ENCODE measurements at regions of chr12 and their contacts with region 1.

Region 1: DNA sequence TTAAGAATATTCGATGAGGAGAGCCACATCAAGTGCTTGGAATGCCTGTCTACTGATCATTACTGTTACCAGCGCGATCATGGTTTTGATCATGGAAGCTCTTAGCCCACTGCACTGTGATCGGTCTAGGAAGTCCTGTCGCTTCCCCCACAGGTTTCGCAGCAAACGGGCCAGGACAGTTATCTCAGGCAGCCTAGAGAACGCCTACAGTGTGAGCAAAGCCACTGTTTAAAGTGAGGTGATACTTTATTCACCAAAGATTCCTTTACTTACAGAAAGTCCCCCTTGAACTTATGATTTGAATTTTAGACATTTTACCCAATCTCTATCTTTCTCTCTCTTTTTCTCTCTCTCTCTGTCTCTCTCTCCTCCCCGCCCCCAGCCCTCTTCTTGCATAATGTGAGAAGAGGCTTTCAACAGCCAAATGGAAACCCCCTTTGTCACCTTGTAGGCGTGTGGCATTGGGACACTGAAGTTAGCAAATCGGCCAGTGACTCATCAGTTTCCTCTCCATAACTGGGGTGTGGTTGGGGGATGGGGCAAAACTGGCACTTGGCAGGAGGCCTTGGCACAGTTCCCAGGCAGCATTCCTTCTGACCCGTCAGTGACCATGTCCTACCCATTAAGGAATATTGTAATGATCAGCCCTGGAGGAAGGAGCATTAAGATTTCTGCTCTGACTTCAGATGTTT is 214.8 kb downstream of the CHST11 start:
- DNase-seq: peak; percentile 88
- ATAC-seq: peak; percentile 86
- H3K4me3 ChIP-seq: peak overlapping the region; percentile 49
- H3K27ac ChIP-seq: peak overlapping the region; percentile 99
- H3K4me1 ChIP-seq: peaks cover 55% of the 10 kb centered on the region
- H3K27me3 ChIP-seq: no peaks in the 10 kb centered on the region
- CTCF ChIP-seq: no peak
- EP300 ChIP-seq: peak; percentile 84 to 95; a peak in 3 of 4 replicates
- POLR2A ChIP-seq: peak; percentile 73
- RAD21 ChIP-seq: peak; percentile 48

Region 2: DNA sequence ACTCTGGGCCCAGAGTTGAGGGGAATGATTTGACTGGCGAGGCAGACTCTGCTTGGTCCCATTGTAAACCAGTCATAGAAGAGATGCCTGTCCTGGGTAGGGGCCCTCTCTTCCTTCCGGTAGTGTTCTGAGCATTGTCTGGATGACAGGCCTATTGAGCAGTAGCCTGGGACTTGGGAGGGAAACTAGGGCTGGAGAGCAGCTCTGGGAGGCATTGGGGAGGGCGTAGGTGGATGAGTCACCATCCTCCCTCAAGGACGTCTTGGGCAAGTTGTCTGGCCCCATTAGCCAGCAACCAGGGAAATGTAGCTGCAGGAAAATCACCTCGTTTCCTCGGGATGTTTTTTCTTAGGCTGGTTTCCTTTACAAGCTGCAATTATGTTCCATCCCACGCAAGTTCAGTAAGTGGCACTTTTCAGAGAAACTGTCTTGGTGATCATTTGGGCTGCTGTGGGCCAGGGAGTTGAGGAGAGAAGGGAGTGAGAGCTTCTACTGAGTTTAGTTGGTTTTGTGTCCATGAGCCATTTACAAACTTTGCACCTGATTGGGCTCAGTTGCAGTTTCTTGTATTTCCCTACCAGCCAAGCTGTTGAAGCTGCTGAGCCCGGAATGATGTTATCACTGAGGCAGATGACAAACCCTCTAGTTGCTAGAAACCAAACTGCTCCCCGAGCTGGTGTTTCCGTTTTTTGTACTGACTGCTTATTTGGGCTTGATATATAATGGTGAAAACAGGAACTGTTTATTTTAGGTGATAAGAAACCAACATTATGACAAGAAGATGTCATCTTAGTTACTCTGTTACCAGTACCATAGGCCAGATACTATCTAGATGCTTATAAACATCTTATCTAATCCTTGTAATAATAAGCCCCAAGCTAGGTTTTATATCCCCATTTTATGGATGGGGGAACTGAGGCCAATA is 67.2 kb before region 1 on chr12:
- CTCF ChIA-PET with region 1: interaction called, 9 read pairs
- POLR2A ChIA-PET with region 1: interaction called, 4 read pairs
- RAD21 ChIA-PET with region 1: interaction called, 10 read pairs
- SMC1A ChIA-PET with region 1: interaction called, 8 read pairs
- in situ Hi-C with region 1: no loop called
- intact Hi-C with region 1: no loop called
- DNase-seq: peak; percentile 86
- ATAC-seq: peak; percentile 90
- H3K4me3 ChIP-seq: no peak overlapping the region
- H3K27ac ChIP-seq: peak overlapping the region; percentile 87
- H3K4me1 ChIP-seq: peaks cover 34% of the 10 kb centered on the region
- H3K27me3 ChIP-seq: no peaks in the 10 kb centered on the region
- CTCF ChIP-seq: 0 out of 6 replicates have a peak, but pooled peaks of 1 of the 3 experiments have one; percentile 4
- EP300 ChIP-seq: peak; percentile 36 to 60; a peak in 1 of 4 replicates
- POLR2A ChIP-seq: no peak
- RAD21 ChIP-seq: peak; percentile 32

Region 3: DNA sequence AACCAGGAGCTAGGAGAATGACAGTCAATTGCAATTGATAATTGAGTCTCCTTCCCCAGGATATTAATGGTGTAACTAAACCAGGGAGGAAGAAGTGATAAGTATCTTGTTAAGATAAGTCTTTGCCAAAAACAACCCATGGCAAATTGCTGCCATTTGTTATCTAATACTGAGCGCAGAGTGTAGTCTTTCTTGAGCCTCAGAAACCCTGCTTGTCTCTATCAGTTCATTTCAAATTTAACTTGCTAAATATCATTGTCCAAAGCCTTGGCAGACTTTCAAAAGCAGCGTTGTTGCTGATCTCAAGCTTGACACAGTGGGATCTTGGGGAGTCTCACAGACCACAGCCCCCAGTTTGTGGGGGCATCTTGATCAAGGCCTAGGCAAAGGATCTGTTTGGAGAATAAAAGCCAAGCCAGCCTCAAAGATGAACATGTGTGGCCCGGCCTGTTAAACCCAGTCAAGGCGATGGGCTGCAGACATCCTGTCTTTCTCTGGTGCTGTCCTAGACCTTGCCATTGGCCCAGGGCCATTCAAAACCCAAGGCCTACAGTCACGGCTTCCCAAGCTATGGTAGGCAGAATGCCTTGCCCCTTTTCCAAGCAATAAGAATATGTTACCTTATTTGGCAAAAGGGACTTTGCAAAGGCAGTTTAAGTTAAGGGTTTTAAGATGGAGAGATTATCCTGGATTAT is 50.6 kb before region 1 on chr12:
- CTCF ChIA-PET with region 1: no interaction called
- POLR2A ChIA-PET with region 1: no interaction called
- RAD21 ChIA-PET with region 1: no interaction called
- SMC1A ChIA-PET with region 1: no interaction called
- in situ Hi-C with region 1: no loop called
- intact Hi-C with region 1: no loop called
- DNase-seq: no peak
- ATAC-seq: no peak
- H3K4me3 ChIP-seq: no peak overlapping the region
- H3K27ac ChIP-seq: no peak overlapping the region
- H3K4me1 ChIP-seq: no peaks in the 10 kb centered on the region
- H3K27me3 ChIP-seq: no peaks in the 10 kb centered on the region
- CTCF ChIP-seq: no peak
- EP300 ChIP-seq: no peak
- POLR2A ChIP-seq: no peak
- RAD21 ChIP-seq: no peak

Region 4: GRCh38 chr12:104641862-104642261 is 29.7 kb before region 1 on chr12:
- CTCF ChIA-PET with region 1: no interaction called
- POLR2A ChIA-PET with region 1: interaction called, 3 read pairs
- RAD21 ChIA-PET with region 1: interaction called, 10 read pairs
- SMC1A ChIA-PET with region 1: interaction called, 11 read pairs
- in situ Hi-C with region 1: no loop called
- intact Hi-C with region 1: loop called (anchors 2 kb)
- DNase-seq: peak; percentile 79
- ATAC-seq: peak; percentile 92
- H3K4me3 ChIP-seq: no peak overlapping the region
- H3K27ac ChIP-seq: peak overlapping the region; percentile 78
- H3K4me1 ChIP-seq: peaks cover 43% of the 10 kb centered on the region
- H3K27me3 ChIP-seq: no peaks in the 10 kb centered on the region
- CTCF ChIP-seq: peak; percentile 37 to 65 (median 50); a peak in 5 of 6 replicates
- EP300 ChIP-seq: peak; percentile 99
- POLR2A ChIP-seq: no peak
- RAD21 ChIP-seq: peak; percentile 65

Region 5: DNA sequence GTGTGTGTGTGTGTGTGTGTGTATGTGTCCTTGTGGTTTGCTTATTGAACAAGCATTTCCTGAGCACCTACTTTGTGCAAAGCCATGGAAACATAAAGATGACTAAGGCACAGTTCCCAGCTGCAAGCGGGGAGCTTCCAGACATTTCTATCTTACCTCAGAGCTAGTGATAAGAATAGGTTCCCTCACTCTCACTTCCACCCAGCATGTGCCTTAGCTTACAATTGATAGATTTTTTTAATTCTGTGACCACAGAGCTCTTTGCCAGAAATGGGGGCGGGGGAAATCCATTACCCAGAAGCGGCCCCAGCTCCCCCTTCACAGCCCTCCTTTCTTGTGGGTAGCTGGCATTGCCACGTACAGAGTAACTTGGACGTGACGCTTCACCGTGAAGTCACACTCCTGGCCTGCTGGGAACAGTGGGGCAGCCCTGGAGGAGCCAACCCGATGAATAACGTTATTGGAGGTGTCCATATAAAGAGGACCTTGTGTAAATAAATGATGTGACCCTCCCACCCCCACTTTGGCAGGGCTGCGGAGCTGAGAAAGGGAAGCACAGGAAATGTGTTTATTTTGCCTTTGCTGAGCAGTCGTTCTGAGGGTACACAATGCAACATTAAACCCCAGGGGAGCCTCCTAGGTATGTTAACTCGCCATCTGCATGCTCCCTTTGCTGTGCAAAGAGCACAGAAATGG is 24.0 kb after region 1 on chr12:
- CTCF ChIA-PET with region 1: interaction called, 6 read pairs
- POLR2A ChIA-PET with region 1: interaction called, 10 read pairs
- RAD21 ChIA-PET with region 1: interaction called, 38 read pairs
- SMC1A ChIA-PET with region 1: interaction called, 28 read pairs
- in situ Hi-C with region 1: no loop called
- intact Hi-C with region 1: no loop called
- DNase-seq: peak; percentile 73
- ATAC-seq: peak; percentile 75
- H3K4me3 ChIP-seq: no peak overlapping the region
- H3K27ac ChIP-seq: peak overlapping the region; percentile 58
- H3K4me1 ChIP-seq: peaks cover 42% of the 10 kb centered on the region
- H3K27me3 ChIP-seq: no peaks in the 10 kb centered on the region
- CTCF ChIP-seq: no peak
- EP300 ChIP-seq: peak; percentile 76 to 78; a peak in 3 of 4 replicates
- POLR2A ChIP-seq: no peak
- RAD21 ChIP-seq: no peak